Endothelial cell of umbilical vein (primary cell): ENCODE measurements at regions of chr11 and their contacts with region 1.

Region 1: GRCh38 chr11:78228467-78228866 is 39.7 kb downstream of the USP35 start:
- DNase-seq: peak; percentile 82
- H3K4me3 ChIP-seq: no peak overlapping the region
- H3K27ac ChIP-seq: no peak overlapping the region
- H3K4me1 ChIP-seq: peaks cover 4% of the 10 kb centered on the region
- H3K27me3 ChIP-seq: no peaks in the 10 kb centered on the region
- CTCF ChIP-seq: peak; percentile 38 to 59
- POLR2A ChIP-seq: no peak

Region 2: GRCh38 chr11:78050964-78051831 is 177.3 kb before region 1 on chr11:
- CTCF ChIA-PET with region 1: no interaction called
- POLR2A ChIA-PET with region 1: no interaction called
- dilution Hi-C with region 1: no loop called
- intact Hi-C with region 1: no loop called
- DNase-seq: peak; percentile 18
- H3K4me3 ChIP-seq: no peak overlapping the region
- H3K27ac ChIP-seq: no peak overlapping the region
- H3K4me1 ChIP-seq: peaks cover 3% of the 10 kb centered on the region
- H3K27me3 ChIP-seq: no peaks in the 10 kb centered on the region
- CTCF ChIP-seq: no peak
- POLR2A ChIP-seq: no peak

Region 3: GRCh38 chr11:78149646-78150045 is 78.8 kb before region 1 on chr11:
- CTCF ChIA-PET with region 1: interaction called, 10 read pairs
- POLR2A ChIA-PET with region 1: no interaction called
- dilution Hi-C with region 1: no loop called
- intact Hi-C with region 1: no loop called
- DNase-seq: peak; percentile 79
- H3K4me3 ChIP-seq: no peak overlapping the region
- H3K27ac ChIP-seq: no peak overlapping the region
- H3K4me1 ChIP-seq: no peaks in the 10 kb centered on the region
- H3K27me3 ChIP-seq: no peaks in the 10 kb centered on the region
- CTCF ChIP-seq: peak in 1 of 2 donors; percentile 24
- POLR2A ChIP-seq: no peak

Region 4: DNA sequence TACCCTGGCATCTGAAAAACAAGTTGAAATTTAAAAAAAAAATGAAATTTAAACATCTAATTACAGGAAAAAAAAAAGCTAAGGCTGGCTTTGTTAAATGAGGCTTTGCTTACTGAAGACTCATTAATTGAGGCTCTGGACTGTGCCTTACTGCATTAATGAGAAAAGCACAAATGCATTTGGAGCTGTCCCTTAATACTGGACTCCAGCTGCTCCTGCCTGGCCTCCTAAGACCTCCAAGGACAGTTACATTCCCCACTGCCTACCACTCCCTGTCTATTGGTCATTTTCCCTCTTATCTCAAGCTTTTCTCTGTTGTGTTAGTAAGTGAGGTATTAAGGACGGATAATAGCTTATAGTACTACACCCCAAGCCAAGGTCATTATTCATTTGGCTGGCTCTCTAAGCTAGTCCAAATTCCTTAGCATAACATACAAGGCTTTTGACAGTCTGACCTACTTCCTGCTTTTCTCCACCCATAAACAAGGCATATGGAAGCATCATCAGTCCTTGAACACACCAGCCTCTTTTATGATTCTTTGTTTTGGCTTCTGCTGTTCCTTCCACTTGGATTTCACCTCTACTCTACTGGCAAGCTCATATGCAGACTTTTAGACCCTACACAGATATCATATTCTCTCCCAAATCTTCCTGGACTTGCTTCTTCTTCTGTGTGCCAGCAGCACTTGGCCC is 22.8 kb after region 1 on chr11:
- CTCF ChIA-PET with region 1: interaction called, 21 read pairs
- POLR2A ChIA-PET with region 1: no interaction called
- dilution Hi-C with region 1: no loop called
- intact Hi-C with region 1: no loop called
- DNase-seq: peak; percentile 58
- H3K4me3 ChIP-seq: no peak overlapping the region
- H3K27ac ChIP-seq: no peak overlapping the region
- H3K4me1 ChIP-seq: peaks cover 16% of the 10 kb centered on the region
- H3K27me3 ChIP-seq: no peaks in the 10 kb centered on the region
- CTCF ChIP-seq: no peak
- POLR2A ChIP-seq: no peak

Region 5: GRCh38 chr11:78350646-78351165 is 122.2 kb after region 1 on chr11:
- CTCF ChIA-PET with region 1: interaction called, 10 read pairs
- POLR2A ChIA-PET with region 1: no interaction called
- dilution Hi-C with region 1: no loop called
- intact Hi-C with region 1: no loop called
- DNase-seq: peak; percentile 57
- H3K4me3 ChIP-seq: peak overlapping the region in 1 of 3 experiments; percentile 25
- H3K27ac ChIP-seq: peak overlapping the region; percentile 32
- H3K4me1 ChIP-seq: peaks cover 33% of the 10 kb centered on the region
- H3K27me3 ChIP-seq: no peaks in the 10 kb centered on the region
- CTCF ChIP-seq: no peak
- POLR2A ChIP-seq: no peak

Region 6: DNA sequence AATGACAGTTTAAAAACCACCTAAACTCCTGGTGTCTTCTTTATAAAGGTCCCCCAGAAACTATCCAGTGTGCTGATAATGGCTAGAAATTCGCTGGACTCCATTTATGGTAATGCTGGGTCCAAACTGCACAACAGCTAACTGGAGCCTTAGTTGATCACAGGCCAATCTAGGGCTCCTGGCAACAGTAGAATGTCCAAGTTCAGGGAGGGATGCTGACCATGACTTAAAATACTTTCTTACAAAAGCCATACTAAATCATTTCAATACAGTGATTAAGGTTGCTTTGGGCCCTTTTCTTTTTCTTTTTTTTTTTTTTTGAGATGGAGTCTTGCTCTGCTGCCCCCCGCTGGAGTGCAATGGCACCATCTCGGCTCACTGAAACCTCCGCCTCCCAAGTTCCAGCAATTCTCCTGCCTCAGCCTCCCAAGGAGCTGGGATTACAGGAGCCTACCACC is 203.6 kb after region 1 on chr11:
- CTCF ChIA-PET with region 1: interaction called, 30 read pairs
- POLR2A ChIA-PET with region 1: no interaction called
- dilution Hi-C with region 1: no loop called
- intact Hi-C with region 1: loop called (anchors 1 kb)
- DNase-seq: peak; percentile 40
- H3K4me3 ChIP-seq: no peak overlapping the region
- H3K27ac ChIP-seq: no peak overlapping the region
- H3K4me1 ChIP-seq: no peaks in the 10 kb centered on the region
- H3K27me3 ChIP-seq: no peaks in the 10 kb centered on the region
- CTCF ChIP-seq: peak; percentile 40 to 67
- POLR2A ChIP-seq: no peak

Region 7: GRCh38 chr11:79321263-79321662 is 1092.8 kb after region 1 on chr11:
- CTCF ChIA-PET with region 1: no interaction called
- POLR2A ChIA-PET with region 1: no interaction called
- dilution Hi-C with region 1: no loop called
- intact Hi-C with region 1: no loop called
- DNase-seq: no peak
- H3K4me3 ChIP-seq: no peak overlapping the region
- H3K27ac ChIP-seq: no peak overlapping the region
- H3K4me1 ChIP-seq: no peaks in the 10 kb centered on the region
- H3K27me3 ChIP-seq: no peaks in the 10 kb centered on the region
- CTCF ChIP-seq: no peak
- POLR2A ChIP-seq: no peak